Activated CD4-positive, alpha-beta memory T cell treated with anti-CD3 and anti-CD28 coated beads, Interleukin-2, amount 10 ng/mL, durations not matched to agents 7 days and 5 days (primary cell): ENCODE measurements at regions of chr4 and their contacts with region 1.

Region 1: GRCh38 chr4:17468371-17469221 is 43.3 kb downstream of the QDPR start:
- DNase-seq: no peak
- H3K4me3 Mint-ChIP-seq: no peak overlapping the region
- H3K27ac Mint-ChIP-seq: no peak overlapping the region
- H3K4me1 Mint-ChIP-seq: peaks cover 1% of the 10 kb centered on the region
- H3K27me3 Mint-ChIP-seq: no peaks in the 10 kb centered on the region

Region 2: GRCh38 chr4:17347445-17347844 is 121.2 kb before region 1 on chr4:
- CTCF ChIA-PET with region 1: interaction called, 19 read pairs
- POLR2A ChIA-PET with region 1: no interaction called
- DNase-seq: peak; percentile 28
- H3K4me3 Mint-ChIP-seq: no peak overlapping the region
- H3K27ac Mint-ChIP-seq: no peak overlapping the region
- H3K4me1 Mint-ChIP-seq: no peaks in the 10 kb centered on the region
- H3K27me3 Mint-ChIP-seq: peaks cover 2% of the 10 kb centered on the region